GM12878 (cell line): ENCODE measurements at regions of chr17 and their contacts with region 1.

Region 1: GRCh38 chr17:66715745-66716156 is 119.2 kb upstream of the CACNG5 start:
- DNase-seq: peak; percentile 53
- ATAC-seq: peak; percentile 34
- H3K4me3 ChIP-seq: no peak overlapping the region
- H3K27ac ChIP-seq: no peak overlapping the region
- H3K4me1 ChIP-seq: peaks cover 26% of the 10 kb centered on the region
- H3K27me3 ChIP-seq: no peaks in the 10 kb centered on the region
- CTCF ChIP-seq: peak; percentile 61 to 87 (median 84)
- EP300 ChIP-seq: no peak
- POLR2A ChIP-seq: no peak
- RAD21 ChIP-seq: peak; percentile 89

Region 2: DNA sequence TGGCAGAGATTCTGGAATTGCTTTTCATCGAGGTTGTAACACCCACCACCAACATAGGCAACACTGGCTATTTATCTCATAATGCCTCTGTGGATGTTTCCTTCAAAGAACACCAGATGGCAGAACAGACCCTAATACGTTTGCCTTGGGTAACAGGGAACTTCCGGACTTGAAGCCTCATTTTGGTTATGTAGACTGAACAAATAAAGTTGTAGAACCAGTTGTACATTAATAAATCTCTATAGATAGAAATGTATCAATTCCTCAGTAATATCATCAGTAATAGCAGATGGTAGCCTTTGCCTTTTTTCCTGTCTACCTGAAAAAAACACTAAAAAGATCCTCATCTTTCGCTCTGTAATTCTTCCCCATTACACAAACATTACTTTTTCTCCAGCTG is 460.6 kb before region 1 on chr17:
- CTCF ChIA-PET with region 1: interaction called, 9 read pairs
- POLR2A ChIA-PET with region 1: no interaction called
- RAD21 ChIA-PET with region 1: interaction called, 3 read pairs
- SMC1A ChIA-PET with region 1: interaction called, 8 read pairs
- in situ Hi-C with region 1: no loop called
- intact Hi-C with region 1: loop called (anchors 5 kb)
- DNase-seq: no peak
- ATAC-seq: peak; percentile 96
- H3K4me3 ChIP-seq: no peak overlapping the region
- H3K27ac ChIP-seq: no peak overlapping the region
- H3K4me1 ChIP-seq: no peaks in the 10 kb centered on the region
- H3K27me3 ChIP-seq: no peaks in the 10 kb centered on the region
- CTCF ChIP-seq: peak; percentile 39 to 81 (median 42); a peak in 4 of 6 replicates
- EP300 ChIP-seq: no peak
- POLR2A ChIP-seq: no peak
- RAD21 ChIP-seq: peak; percentile 83

Region 3: DNA sequence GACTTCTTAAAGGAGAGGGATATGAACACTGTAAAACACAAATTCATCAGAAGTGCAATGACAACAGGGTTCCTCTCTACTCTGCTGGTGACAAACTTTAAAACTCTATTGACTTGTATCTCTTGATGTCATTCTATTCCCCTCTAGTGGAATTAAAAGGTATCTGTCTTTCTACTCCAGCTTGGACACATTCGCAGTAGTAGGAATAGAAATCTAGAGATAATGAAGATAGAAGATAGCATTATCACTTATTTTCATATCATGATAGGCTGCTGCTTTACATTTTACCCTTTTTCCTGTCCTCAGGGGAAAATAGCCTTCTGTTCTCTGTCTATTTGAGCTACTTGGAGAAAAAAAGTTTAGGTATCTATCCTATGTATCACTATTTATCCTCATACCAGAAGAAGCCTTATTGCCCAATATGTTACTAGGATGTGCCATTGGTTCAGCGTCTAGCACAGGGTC is 90.4 kb before region 1 on chr17:
- CTCF ChIA-PET with region 1: interaction called, 4 read pairs
- POLR2A ChIA-PET with region 1: no interaction called
- RAD21 ChIA-PET with region 1: interaction called, 3 read pairs
- SMC1A ChIA-PET with region 1: interaction called, 3 read pairs
- in situ Hi-C with region 1: no loop called
- intact Hi-C with region 1: loop called (anchors 5 kb)
- DNase-seq: no peak
- ATAC-seq: peak; percentile 77
- H3K4me3 ChIP-seq: no peak overlapping the region
- H3K27ac ChIP-seq: no peak overlapping the region
- H3K4me1 ChIP-seq: no peaks in the 10 kb centered on the region
- H3K27me3 ChIP-seq: no peaks in the 10 kb centered on the region
- CTCF ChIP-seq: peak in 2 of 3 experiments; percentile 9 to 14; a peak in 2 of 6 replicates
- EP300 ChIP-seq: no peak
- POLR2A ChIP-seq: no peak
- RAD21 ChIP-seq: peak; percentile 41; the same call in 1 of the 2 replicates

Region 4: DNA sequence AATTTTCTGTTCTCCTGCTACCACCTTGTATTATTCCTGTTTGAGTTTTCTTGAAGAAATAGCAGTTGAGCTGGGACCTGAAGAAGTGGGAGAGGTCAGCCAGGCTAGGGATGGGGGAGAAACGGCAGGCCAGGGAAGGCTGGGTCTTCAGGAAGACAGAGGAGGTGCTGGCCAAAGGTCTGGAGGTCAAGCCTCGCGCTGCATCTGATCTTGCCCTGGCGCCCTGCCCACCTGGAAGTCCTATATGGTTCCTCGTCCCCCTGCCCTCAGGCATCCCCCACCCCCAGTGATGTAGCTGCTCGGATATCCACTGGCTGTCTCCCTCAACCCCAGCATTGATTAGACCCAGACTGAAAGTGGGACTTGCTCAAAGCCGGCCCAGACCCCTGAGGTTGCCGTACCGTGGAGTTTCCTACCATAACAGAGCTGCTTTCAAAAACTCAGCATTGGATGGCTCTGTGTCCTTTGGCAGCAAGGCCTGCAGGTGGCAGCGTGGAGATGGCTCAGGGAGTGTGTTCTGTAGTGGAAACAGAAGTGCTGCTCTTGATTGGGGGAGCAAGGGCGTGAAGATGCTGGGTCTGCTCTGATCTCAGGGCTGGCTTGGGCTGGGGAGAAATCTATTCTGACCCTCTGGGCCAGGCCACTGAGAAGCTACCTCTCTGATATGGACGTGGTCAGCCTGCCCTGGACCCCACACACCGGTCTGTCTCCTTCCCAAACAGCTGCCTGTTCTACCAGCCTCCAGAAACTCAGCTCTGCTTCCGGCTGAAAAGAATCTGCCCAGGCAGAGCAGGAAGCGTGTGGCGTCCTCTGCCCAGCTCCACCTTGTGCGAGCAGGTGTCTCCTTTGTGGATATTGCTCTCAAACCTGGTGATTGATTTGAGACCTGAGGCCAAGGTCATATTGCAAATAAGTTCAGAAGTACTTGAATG is 12.2 kb after region 1 on chr17:
- CTCF ChIA-PET with region 1: interaction called, 56 read pairs
- POLR2A ChIA-PET with region 1: interaction called, 3 read pairs
- RAD21 ChIA-PET with region 1: interaction called, 7 read pairs
- SMC1A ChIA-PET with region 1: interaction called, 6 read pairs
- in situ Hi-C with region 1: no loop called
- intact Hi-C with region 1: no loop called
- DNase-seq: no peak
- ATAC-seq: peak; percentile 99
- H3K4me3 ChIP-seq: no peak overlapping the region
- H3K27ac ChIP-seq: no peak overlapping the region
- H3K4me1 ChIP-seq: no peaks in the 10 kb centered on the region
- H3K27me3 ChIP-seq: no peaks in the 10 kb centered on the region; a peak in 2 of 4 replicates
- CTCF ChIP-seq: peak; percentile 72 to 87 (median 80); a peak in 5 of 6 replicates
- EP300 ChIP-seq: no peak
- POLR2A ChIP-seq: no peak
- RAD21 ChIP-seq: peak; percentile 83

Region 5: DNA sequence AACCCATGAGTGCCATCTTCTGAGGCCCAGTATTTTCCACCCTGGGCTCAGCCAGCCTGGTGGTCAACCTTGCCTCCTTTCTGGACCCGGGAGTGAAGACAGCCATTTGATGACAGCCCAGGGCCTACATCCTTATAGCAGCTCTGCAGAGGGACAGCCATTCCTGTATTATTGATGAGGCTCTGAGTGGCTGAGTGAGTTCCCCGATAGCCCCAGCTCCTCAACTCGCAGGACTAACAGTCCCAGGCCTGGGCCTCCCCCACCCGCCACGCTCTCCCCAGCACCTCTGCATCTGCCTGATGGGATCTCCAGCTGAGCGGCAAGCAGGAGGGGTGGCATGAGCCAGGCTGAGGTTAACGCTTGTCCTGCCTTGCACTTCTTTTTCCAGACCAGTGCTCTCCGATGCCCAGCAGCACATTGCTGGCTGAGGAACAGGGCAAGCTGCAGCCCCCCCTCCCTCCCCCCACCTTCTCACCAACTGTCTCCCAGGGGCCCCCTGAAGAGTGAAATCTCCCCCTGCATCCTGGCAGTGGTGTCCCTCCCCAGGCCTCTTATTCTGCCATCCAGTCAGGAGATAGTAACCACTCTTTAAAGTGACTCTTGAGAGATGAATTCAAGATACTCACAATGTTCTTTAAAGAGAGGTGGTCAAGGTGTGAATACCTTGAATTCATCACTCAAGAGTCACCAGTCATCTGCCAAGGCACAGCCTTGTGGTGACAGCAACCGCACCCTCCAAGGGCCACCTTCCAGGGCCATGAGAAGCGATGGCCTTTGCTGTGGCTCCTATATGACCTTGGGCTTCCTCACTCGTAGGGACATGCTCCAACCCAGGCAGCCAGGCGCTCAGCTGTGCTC is 142.7 kb after region 1 on chr17:
- CTCF ChIA-PET with region 1: no interaction called
- POLR2A ChIA-PET with region 1: no interaction called
- RAD21 ChIA-PET with region 1: no interaction called
- SMC1A ChIA-PET with region 1: no interaction called
- in situ Hi-C with region 1: no loop called
- intact Hi-C with region 1: no loop called
- DNase-seq: no peak
- ATAC-seq: no peak
- H3K4me3 ChIP-seq: no peak overlapping the region
- H3K27ac ChIP-seq: no peak overlapping the region
- H3K4me1 ChIP-seq: no peaks in the 10 kb centered on the region
- H3K27me3 ChIP-seq: no peaks in the 10 kb centered on the region
- CTCF ChIP-seq: no peak
- EP300 ChIP-seq: no peak
- POLR2A ChIP-seq: no peak
- RAD21 ChIP-seq: no peak

Region 6: DNA sequence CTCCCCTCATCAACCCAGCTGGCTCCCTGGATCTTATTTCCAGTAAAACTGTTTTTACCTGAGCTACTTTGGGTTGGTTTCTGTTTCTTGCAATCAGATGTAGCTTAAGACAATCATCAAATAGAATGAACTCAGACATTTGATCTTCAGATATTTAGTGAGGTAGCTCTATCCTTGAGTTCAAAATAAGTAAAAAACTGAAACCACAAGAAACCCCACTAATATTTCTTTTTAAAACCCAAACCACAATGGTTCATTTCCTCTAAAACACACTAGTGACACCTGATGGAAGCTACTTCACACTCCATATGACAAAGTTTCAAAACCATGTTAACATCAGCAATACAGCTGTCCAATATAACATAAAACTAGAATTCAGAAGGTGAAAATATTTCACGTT is 366.4 kb after region 1 on chr17:
- CTCF ChIA-PET with region 1: interaction called, 16 read pairs
- POLR2A ChIA-PET with region 1: interaction called, 3 read pairs
- RAD21 ChIA-PET with region 1: interaction called, 16 read pairs
- SMC1A ChIA-PET with region 1: interaction called, 14 read pairs
- in situ Hi-C with region 1: no loop called
- intact Hi-C with region 1: loop called (anchors 2 kb)
- DNase-seq: peak; percentile 26
- ATAC-seq: peak; percentile 90
- H3K4me3 ChIP-seq: no peak overlapping the region
- H3K27ac ChIP-seq: no peak overlapping the region
- H3K4me1 ChIP-seq: peaks cover 15% of the 10 kb centered on the region
- H3K27me3 ChIP-seq: no peaks in the 10 kb centered on the region
- CTCF ChIP-seq: peak; percentile 33 to 51 (median 43); a peak in 5 of 6 replicates
- EP300 ChIP-seq: 0 out of 4 replicates have a peak, but pooled peaks of 1 of the 2 experiments have one; percentile 37
- POLR2A ChIP-seq: no peak
- RAD21 ChIP-seq: peak; percentile 80

Region 7: DNA sequence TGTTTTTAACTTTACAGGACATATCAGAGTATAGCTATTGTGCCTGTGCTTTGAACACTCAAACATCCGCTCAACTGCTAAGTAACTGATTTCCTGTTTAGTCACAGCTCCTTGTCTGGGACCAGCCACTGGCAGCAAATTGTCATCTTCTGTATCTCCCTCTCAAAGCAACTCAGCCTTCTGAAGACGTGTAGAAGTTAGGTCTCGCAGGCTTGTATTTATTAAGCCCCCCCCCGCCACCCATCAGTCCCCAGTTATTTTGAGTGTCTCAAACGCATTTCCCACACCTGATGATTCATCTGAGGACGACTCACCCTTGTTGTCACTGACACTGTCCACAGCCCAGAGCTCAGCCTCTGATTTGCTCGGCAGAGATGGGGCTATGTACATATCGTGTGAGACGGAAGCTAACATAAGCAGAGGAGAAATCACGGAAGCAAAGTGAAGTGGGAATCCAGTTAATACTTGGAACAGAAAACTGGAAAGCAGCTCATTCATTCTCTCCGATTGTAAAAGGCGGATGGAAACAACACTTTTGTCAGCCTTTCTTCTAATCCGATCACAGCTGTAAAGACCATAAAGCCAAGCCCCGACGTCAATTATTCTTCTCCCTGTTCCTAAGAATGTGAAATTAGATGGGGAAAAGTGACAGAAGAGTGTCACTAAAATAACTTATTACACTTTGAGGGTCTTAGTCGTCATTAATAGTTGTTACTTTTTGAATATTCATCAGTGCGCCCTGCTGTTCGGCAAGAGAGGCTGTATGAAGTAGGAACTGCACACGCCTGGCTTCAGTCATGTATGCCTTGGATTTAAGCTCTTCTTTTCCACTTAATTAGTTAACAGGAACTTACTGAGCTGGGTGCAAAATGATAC is 725.5 kb after region 1 on chr17:
- CTCF ChIA-PET with region 1: no interaction called
- POLR2A ChIA-PET with region 1: no interaction called
- RAD21 ChIA-PET with region 1: no interaction called
- SMC1A ChIA-PET with region 1: no interaction called
- in situ Hi-C with region 1: loop called (anchors 25 kb)
- intact Hi-C with region 1: no loop called
- DNase-seq: no peak
- ATAC-seq: peak; percentile 76
- H3K4me3 ChIP-seq: no peak overlapping the region
- H3K27ac ChIP-seq: peak overlapping the region; percentile 61
- H3K4me1 ChIP-seq: peaks cover 9% of the 10 kb centered on the region
- H3K27me3 ChIP-seq: no peaks in the 10 kb centered on the region
- CTCF ChIP-seq: no peak
- EP300 ChIP-seq: no peak
- POLR2A ChIP-seq: no peak
- RAD21 ChIP-seq: no peak